Left cardiac atrium (tissue), 4 donors: ENCODE measurements at regions of chr9 and their contacts with region 1.

Region 1: GRCh38 chr9:25602400-25603046 is 75.7 kb downstream of the TUSC1 start:
- DNase-seq: no peak
- ATAC-seq: no peak

Region 2: GRCh38 chr9:25724424-25724823 is 121.9 kb after region 1 on chr9:
- intact Hi-C with region 1: loop called in 1 of 2 experiments (anchors 10 kb)
- DNase-seq: no peak
- ATAC-seq: no peak